T-cell (primary cell): ENCODE measurements at regions of chr12 and their contacts with region 1.

Region 1: DNA sequence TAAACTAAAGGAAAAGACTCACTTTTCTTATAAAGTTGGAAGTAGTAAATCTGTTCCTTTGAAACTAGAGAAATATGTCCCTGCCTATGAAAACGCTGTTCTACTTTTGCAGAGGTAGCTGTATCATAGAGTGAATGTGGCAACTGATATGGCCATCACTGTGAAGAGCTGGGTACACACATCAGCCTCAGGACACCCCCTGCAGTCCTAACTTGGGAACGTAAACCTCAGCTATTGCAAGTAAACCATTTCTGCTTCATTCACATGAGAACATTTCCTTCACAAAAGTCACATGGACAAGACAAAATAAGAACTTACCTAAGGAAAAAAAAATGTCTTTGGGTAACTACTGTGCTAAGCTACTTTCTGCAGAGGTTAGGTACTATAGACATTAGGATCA is 233.3 kb upstream of the PPFIA2 start:
- DNase-seq: peak in 30 of 35 experiments; percentile 4 to 63 (median 20)
- ATAC-seq: peak in 2 of 4 experiments; percentile 69 to 79
- H3K4me3 ChIP-seq: no peak overlapping the region
- H3K4me3 Mint-ChIP-seq: no peak overlapping the region
- H3K27ac ChIP-seq: no peak overlapping the region
- H3K27ac Mint-ChIP-seq: no peak overlapping the region
- H3K4me1 ChIP-seq: no peaks in the 10 kb centered on the region
- H3K4me1 Mint-ChIP-seq: peaks cover 0 to 5% (median 4%) of the 10 kb centered on the region in 3 donors
- H3K27me3 ChIP-seq: no peaks in the 10 kb centered on the region
- H3K27me3 Mint-ChIP-seq: no peaks in the 10 kb centered on the region

Region 2: DNA sequence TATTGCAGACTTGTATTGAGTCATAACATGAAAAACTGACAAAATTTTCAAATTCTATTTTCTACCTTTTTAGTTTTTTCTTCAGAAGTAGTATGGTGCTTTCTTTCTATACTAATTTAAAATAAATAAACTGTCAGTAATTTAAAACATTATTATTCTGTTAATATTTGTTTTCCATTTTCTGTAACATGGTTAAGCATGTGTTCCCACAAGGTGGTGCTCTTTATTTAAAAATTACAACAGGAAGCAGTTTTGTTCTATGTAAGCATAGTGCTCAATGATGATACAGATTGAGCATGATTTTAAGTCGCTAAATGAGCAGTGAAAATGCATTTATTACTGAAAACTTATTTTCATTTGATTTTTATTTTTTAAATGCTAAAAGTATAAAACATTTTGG is 348.0 kb before region 1 on chr12:
- CTCF ChIA-PET with region 1: interaction called, 35 to 44 read pairs
- POLR2A ChIA-PET with region 1: no interaction called
- DNase-seq: peak in 1 of 35 experiments; percentile 61
- ATAC-seq: peak in 1 of 4 experiments; percentile 59
- H3K4me3 ChIP-seq: no peak overlapping the region
- H3K4me3 Mint-ChIP-seq: no peak overlapping the region
- H3K27ac ChIP-seq: no peak overlapping the region
- H3K27ac Mint-ChIP-seq: no peak overlapping the region
- H3K4me1 ChIP-seq: no peaks in the 10 kb centered on the region
- H3K4me1 Mint-ChIP-seq: no peaks in the 10 kb centered on the region
- H3K27me3 ChIP-seq: peaks cover 0 to 3% of the 10 kb centered on the region in 2 experiments
- H3K27me3 Mint-ChIP-seq: peaks cover 0 to 3% of the 10 kb centered on the region in 2 donors

Region 3: GRCh38 chr12:81974762-81975161 is 17.7 kb before region 1 on chr12:
- CTCF ChIA-PET with region 1: no interaction called
- POLR2A ChIA-PET with region 1: no interaction called
- DNase-seq: no peak
- ATAC-seq: no peak
- H3K4me3 ChIP-seq: no peak overlapping the region
- H3K4me3 Mint-ChIP-seq: no peak overlapping the region
- H3K27ac ChIP-seq: no peak overlapping the region
- H3K27ac Mint-ChIP-seq: no peak overlapping the region
- H3K4me1 ChIP-seq: no peaks in the 10 kb centered on the region
- H3K4me1 Mint-ChIP-seq: no peaks in the 10 kb centered on the region
- H3K27me3 ChIP-seq: no peaks in the 10 kb centered on the region
- H3K27me3 Mint-ChIP-seq: no peaks in the 10 kb centered on the region

Region 4: DNA sequence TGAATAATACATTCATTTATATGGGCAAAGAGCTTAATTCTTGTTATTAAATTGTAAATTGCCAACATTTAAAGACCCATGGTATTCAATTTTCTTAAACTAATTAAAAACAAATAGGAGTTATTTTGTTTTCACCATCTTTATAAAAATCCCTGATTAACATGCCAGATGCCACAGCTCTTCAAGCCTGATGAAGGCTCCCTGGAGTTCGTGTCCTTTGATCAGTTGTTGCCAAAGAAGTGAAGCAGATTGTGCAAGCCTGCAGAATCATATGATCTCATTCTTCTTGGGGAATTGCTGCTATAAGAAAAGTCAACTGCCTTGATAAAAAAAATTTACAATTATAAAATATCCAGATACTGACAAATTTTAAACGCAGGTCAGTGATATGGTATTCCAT is 55.0 kb after region 1 on chr12:
- CTCF ChIA-PET with region 1: no interaction called
- POLR2A ChIA-PET with region 1: no interaction called
- DNase-seq: no peak
- ATAC-seq: no peak
- H3K4me3 ChIP-seq: no peak overlapping the region
- H3K4me3 Mint-ChIP-seq: no peak overlapping the region
- H3K27ac ChIP-seq: no peak overlapping the region
- H3K27ac Mint-ChIP-seq: no peak overlapping the region
- H3K4me1 ChIP-seq: no peaks in the 10 kb centered on the region
- H3K4me1 Mint-ChIP-seq: no peaks in the 10 kb centered on the region
- H3K27me3 ChIP-seq: no peaks in the 10 kb centered on the region
- H3K27me3 Mint-ChIP-seq: peaks cover 4 to 5% of the 10 kb centered on the region in 2 donors